ENCODE measurements at regions of chr16 and their contacts with region 1.

Region 1: GRCh38 chr16:47141773-47142485 is 1.8 kb downstream of the NETO2 start:
- DNase-seq: peak; percentile 53 to 83 (median 75)
- ATAC-seq: peak; percentile 86
- H3K4me3 ChIP-seq: peak overlapping the region; percentile 30
- H3K4me3 Mint-ChIP-seq: peak overlapping the region; percentile 72 to 89 (median 84)
- H3K27ac ChIP-seq: no peak overlapping the region
- H3K27ac Mint-ChIP-seq: peak overlapping the region in 2 of 9 donors; percentile 14 to 77
- H3K4me1 ChIP-seq: peaks cover 10 to 15% of the 10 kb centered on the region in 2 donors
- H3K4me1 Mint-ChIP-seq: peaks cover 12 to 29% (median 17%) of the 10 kb centered on the region in 7 donors
- H3K27me3 ChIP-seq: peaks cover 0 to 12% of the 10 kb centered on the region in 2 donors
- H3K27me3 Mint-ChIP-seq: peaks cover 22 to 37% (median 34%) of the 10 kb centered on the region in 5 donors

Region 2: GRCh38 chr16:46973207-46973995 is 168.5 kb before region 1 on chr16 and contains the start of gene DNAJA2:
- CTCF ChIA-PET with region 1: no interaction called
- POLR2A ChIA-PET with region 1: no interaction called
- intact Hi-C with region 1: loop called (anchors 5 to 10 kb)
- DNase-seq: peak; percentile 86 to 95 (median 92)
- ATAC-seq: peak; percentile 98
- H3K4me3 ChIP-seq: peak within 1 kb of the TSS; percentile 81
- H3K4me3 Mint-ChIP-seq: peak within 1 kb of the TSS; percentile 88 to 98 (median 95)
- H3K27ac ChIP-seq: peak within 1 kb of the TSS; percentile 93
- H3K27ac Mint-ChIP-seq: peak within 1 kb of the TSS; percentile 87 to 100 (median 99)
- H3K4me1 ChIP-seq: peaks cover 26 to 33% of the 10 kb centered on the region in 2 donors
- H3K4me1 Mint-ChIP-seq: peaks cover 27 to 70% (median 51%) of the 10 kb centered on the region in 7 donors
- H3K27me3 ChIP-seq: no peaks in the 10 kb centered on the region
- H3K27me3 Mint-ChIP-seq: no peaks in the 10 kb centered on the region
- total RNA-seq, gene DNAJA2: 59.4 to 73.3 (median 60.9) TPM

Region 3: GRCh38 chr16:47568351-47568750 is 426.4 kb after region 1 on chr16:
- CTCF ChIA-PET with region 1: no interaction called
- POLR2A ChIA-PET with region 1: no interaction called
- intact Hi-C with region 1: loop called in 1 of 2 experiments (anchors 2 kb)
- DNase-seq: peak in 3 of 9 donors; percentile 12 to 49 (median 38)
- ATAC-seq: peak; percentile 48
- H3K4me3 ChIP-seq: peak overlapping the region; percentile 0
- H3K4me3 Mint-ChIP-seq: peak overlapping the region; percentile 7 to 84 (median 64)
- H3K27ac ChIP-seq: peak overlapping the region; percentile 2
- H3K27ac Mint-ChIP-seq: peak overlapping the region; percentile 56 to 91 (median 71)
- H3K4me1 ChIP-seq: peaks cover 21 to 27% of the 10 kb centered on the region in 2 donors
- H3K4me1 Mint-ChIP-seq: peaks cover 61 to 79% (median 72%) of the 10 kb centered on the region in 7 donors
- H3K27me3 ChIP-seq: no peaks in the 10 kb centered on the region
- H3K27me3 Mint-ChIP-seq: no peaks in the 10 kb centered on the region

Region 4: GRCh38 chr16:48054881-48055601 is 913.1 kb after region 1 on chr16:
- CTCF ChIA-PET with region 1: no interaction called
- POLR2A ChIA-PET with region 1: no interaction called
- intact Hi-C with region 1: loop called (anchors 1 to 2 kb)
- DNase-seq: peak in 2 of 9 donors; percentile 13 to 29
- ATAC-seq: peak; percentile 44
- H3K4me3 ChIP-seq: no peak overlapping the region
- H3K4me3 Mint-ChIP-seq: no peak overlapping the region
- H3K27ac ChIP-seq: no peak overlapping the region
- H3K27ac Mint-ChIP-seq: no peak overlapping the region
- H3K4me1 ChIP-seq: no peaks in the 10 kb centered on the region
- H3K4me1 Mint-ChIP-seq: peaks cover 0 to 5% (median 0%) of the 10 kb centered on the region in 7 donors
- H3K27me3 ChIP-seq: no peaks in the 10 kb centered on the region
- H3K27me3 Mint-ChIP-seq: peaks cover 14 to 28% (median 22%) of the 10 kb centered on the region in 5 donors

Region 5: GRCh38 chr16:48244080-48244862 is 1102.3 kb after region 1 on chr16 and contains the start of gene LONP2:
- CTCF ChIA-PET with region 1: no interaction called
- POLR2A ChIA-PET with region 1: interaction called, 7 read pairs
- intact Hi-C with region 1: loop called (anchors 1 to 2 kb)
- DNase-seq: peak; percentile 79 to 97 (median 93)
- ATAC-seq: peak; percentile 99
- H3K4me3 ChIP-seq: peak within 1 kb of the TSS; percentile 78
- H3K4me3 Mint-ChIP-seq: peak within 1 kb of the TSS; percentile 93 to 100 (median 96)
- H3K27ac ChIP-seq: peak within 1 kb of the TSS; percentile 78
- H3K27ac Mint-ChIP-seq: peak within 1 kb of the TSS; percentile 89 to 98 (median 96)
- H3K4me1 ChIP-seq: peaks cover 25 to 27% of the 10 kb centered on the region in 2 donors
- H3K4me1 Mint-ChIP-seq: peaks cover 29 to 56% (median 45%) of the 10 kb centered on the region in 7 donors
- H3K27me3 ChIP-seq: no peaks in the 10 kb centered on the region
- H3K27me3 Mint-ChIP-seq: no peaks in the 10 kb centered on the region
- total RNA-seq, gene LONP2: 62.3 to 124 (median 83.0) TPM

Region 6: GRCh38 chr16:48632137-48632774 is 1490.3 kb after region 1 on chr16:
- CTCF ChIA-PET with region 1: no interaction called
- POLR2A ChIA-PET with region 1: no interaction called
- intact Hi-C with region 1: loop called in 1 of 2 experiments (anchors 5 kb)
- DNase-seq: no peak
- ATAC-seq: no peak
- H3K4me3 ChIP-seq: no peak overlapping the region
- H3K4me3 Mint-ChIP-seq: no peak overlapping the region
- H3K27ac ChIP-seq: no peak overlapping the region
- H3K27ac Mint-ChIP-seq: no peak overlapping the region
- H3K4me1 ChIP-seq: peaks cover 0 to 5% of the 10 kb centered on the region in 2 donors
- H3K4me1 Mint-ChIP-seq: peaks cover 0 to 9% (median 7%) of the 10 kb centered on the region in 7 donors
- H3K27me3 ChIP-seq: no peaks in the 10 kb centered on the region
- H3K27me3 Mint-ChIP-seq: peaks cover 0 to 2% (median 0%) of the 10 kb centered on the region in 5 donors

Measured in naive thymus-derived CD4-positive, alpha-beta T cell (primary cell).